ENCODE measurements at regions of chr4 and their contacts with region 1.

Region 1: DNA sequence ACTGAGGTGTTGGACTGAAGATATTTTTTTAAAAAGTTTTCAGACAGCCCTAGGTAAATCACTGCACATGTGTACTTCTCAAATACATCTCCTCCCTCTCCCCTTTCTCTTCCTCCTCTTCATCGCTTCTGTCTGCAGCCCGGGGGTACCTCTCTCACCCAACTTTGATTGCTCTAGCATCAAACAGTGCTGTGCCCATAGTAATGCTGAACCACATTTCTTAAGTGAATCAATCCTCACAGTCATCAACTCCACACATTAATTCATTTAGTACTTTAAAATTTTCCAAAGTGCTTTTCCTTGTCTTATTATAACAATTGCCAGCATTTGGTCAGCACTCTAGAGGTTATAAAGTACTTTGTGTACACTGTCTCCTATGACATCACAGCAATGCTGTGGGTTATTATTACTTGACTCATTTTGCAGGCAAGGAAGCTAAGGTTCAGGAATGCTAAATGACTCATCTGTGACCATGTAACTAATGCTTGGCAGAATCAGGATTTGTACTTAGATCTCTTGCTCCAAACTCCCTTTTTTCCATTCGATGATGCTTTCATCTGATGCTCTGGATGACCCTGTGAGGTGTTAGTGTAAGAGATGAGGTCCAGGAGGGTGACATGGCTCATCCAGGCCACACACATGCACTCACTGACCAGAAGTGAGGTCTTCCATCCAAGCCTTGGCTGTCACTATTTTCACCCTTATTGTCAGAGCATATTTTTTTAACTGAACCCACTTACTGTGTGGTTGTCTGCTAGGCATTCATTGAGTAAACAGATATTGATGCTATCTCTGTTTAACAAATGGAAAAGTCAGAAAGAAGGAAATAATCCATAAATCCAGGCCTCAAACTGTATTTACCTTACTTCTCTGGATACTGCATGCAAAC is 58.8 kb downstream of the RHOH start:
- DNase-seq: peak; percentile 95
- H3K4me3 ChIP-seq: no peak overlapping the region
- H3K27ac ChIP-seq: peak overlapping the region; percentile 95
- H3K4me1 ChIP-seq: peaks cover 53% of the 10 kb centered on the region
- H3K27me3 ChIP-seq: no peaks in the 10 kb centered on the region
- CTCF ChIP-seq: no peak

Region 2: GRCh38 chr4:39994406-39994805 is 261.2 kb before region 1 on chr4:
- CTCF ChIA-PET with region 1: no interaction called
- dilution Hi-C with region 1: no loop called
- in situ Hi-C with region 1: no loop called
- intact Hi-C with region 1: no loop called
- DNase-seq: no peak
- H3K4me3 ChIP-seq: no peak overlapping the region
- H3K27ac ChIP-seq: no peak overlapping the region
- H3K4me1 ChIP-seq: no peaks in the 10 kb centered on the region
- H3K27me3 ChIP-seq: no peaks in the 10 kb centered on the region
- CTCF ChIP-seq: no peak

Region 3: DNA sequence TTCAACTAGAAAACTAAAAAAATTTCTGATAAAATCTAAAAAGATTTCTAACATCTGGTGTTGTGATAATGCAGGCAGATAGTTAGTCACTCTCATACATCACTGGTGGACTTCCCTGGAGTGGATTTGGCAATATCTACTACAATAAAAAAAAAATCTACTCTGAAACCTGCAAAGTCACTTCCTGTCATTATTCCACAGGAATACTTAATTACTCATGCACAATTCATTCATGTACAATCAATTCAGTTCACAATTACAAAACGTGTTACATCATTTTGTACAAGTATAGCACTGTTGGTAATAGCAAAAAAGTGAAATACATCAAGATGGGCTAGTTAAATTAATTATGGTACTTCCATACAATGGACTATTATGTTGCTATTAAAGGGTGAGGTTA is 75.3 kb before region 1 on chr4:
- CTCF ChIA-PET with region 1: no interaction called
- dilution Hi-C with region 1: no loop called
- in situ Hi-C with region 1: no loop called
- intact Hi-C with region 1: loop called (anchors 2 kb)
- DNase-seq: peak; percentile 93
- H3K4me3 ChIP-seq: no peak overlapping the region
- H3K27ac ChIP-seq: peak overlapping the region; percentile 99
- H3K4me1 ChIP-seq: peaks cover 33% of the 10 kb centered on the region
- H3K27me3 ChIP-seq: no peaks in the 10 kb centered on the region
- CTCF ChIP-seq: no peak

Region 4: DNA sequence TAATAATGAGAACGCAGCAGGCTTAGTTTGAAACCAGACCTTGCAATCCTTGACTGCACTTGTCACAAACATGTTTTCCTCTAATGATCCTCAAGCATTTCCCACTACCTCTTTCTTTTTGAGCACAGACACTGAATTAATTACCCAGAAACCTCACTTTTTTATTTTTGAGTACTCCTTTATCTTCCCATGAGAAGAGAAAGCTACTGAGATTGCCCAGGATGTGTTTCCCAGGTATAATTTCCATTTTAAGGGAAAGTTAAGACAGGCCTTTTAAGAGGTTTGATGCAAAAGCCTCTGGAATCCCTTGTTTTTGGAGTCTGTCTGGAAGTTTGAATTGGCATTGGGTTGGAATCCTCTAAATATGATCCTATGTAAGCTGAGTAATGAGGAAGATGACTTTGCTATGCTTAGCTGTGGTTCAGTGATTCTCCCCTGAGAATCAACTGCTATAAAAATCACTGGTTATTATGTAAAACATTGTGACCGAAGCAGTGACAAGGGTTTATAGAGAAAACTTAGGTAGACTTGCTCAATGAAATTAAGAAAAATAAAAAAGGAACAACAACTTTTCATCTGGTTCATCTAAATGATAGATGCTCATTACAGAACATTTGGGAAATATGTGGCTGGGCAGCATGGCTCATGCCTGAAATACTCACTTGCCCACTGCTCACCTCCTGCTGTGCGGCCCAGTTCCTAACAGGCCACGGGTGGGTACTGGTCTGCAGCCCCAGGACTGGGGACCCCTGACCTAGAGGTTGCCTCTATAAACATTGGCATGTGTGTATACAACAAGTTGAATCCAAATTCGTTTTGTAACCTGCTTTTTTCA is 69.6 kb before region 1 on chr4:
- CTCF ChIA-PET with region 1: no interaction called
- dilution Hi-C with region 1: no loop called
- in situ Hi-C with region 1: no loop called
- intact Hi-C with region 1: loop called (anchors 2 kb)
- DNase-seq: no peak
- H3K4me3 ChIP-seq: no peak overlapping the region
- H3K27ac ChIP-seq: peak overlapping the region; percentile 98
- H3K4me1 ChIP-seq: peaks cover 34% of the 10 kb centered on the region
- H3K27me3 ChIP-seq: no peaks in the 10 kb centered on the region
- CTCF ChIP-seq: no peak

Region 5: DNA sequence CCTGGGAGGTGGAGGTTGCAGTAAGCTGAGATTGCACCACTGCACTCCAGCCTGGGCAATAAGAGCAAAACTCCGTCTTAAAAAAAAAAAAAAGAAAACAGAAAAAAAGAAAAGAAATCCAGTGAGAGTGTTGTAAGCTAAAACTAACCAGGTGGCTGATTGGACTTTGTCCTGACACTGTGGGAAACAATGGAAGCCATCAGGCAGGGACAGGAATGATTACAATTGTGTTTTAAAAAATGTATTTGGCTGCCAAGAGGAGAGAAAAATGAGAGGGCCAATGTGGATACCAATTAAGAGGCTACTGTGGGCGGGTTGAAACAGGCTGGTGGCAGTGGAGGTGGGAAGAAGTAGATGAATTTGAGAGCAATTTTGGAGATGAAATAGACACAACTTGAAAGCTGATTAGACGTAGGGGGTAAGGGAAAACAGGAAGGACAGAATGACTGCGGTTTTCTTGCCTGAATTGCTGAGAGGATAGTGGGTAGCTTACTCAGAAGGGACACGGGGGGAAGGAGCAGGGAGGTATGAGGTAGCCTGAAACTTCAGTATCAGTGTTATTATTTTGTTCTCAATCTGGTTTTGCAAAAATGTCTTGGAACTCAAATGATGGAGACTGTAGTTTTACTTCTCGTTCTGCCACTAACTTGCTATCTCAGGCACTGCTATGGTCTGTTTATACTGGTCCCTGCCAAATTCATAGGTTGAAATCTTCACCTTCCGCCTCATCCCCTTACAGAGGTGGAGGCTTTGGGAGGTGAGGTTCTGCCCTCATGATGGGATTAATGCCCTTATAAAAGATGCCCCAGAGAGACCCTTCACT is 33.9 kb after region 1 on chr4:
- CTCF ChIA-PET with region 1: no interaction called
- dilution Hi-C with region 1: no loop called
- in situ Hi-C with region 1: no loop called
- intact Hi-C with region 1: loop called (anchors 2 kb)
- DNase-seq: no peak
- H3K4me3 ChIP-seq: no peak overlapping the region
- H3K27ac ChIP-seq: peak overlapping the region; percentile 62
- H3K4me1 ChIP-seq: peaks cover 32% of the 10 kb centered on the region
- H3K27me3 ChIP-seq: no peaks in the 10 kb centered on the region
- CTCF ChIP-seq: no peak

Region 6: DNA sequence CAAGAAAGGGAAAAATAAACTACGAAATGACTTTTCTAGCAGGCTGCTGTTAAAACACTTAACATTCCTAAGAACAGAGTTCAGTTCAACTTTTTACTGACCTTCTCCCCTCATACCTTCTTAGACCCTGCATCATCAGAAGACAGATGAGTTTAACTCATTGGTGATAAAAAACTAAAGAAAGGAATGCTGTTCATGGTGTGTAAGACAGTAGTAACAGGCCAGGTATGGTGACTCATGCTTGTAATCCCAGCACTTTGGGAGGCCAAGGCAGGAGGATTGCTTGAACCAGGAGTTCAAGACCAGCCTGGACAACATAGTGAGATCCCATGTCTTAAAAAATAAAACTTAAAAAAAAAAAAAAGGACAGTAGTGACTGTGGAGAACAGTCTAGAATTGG is 357.8 kb after region 1 on chr4:
- CTCF ChIA-PET with region 1: no interaction called
- dilution Hi-C with region 1: no loop called
- in situ Hi-C with region 1: no loop called
- intact Hi-C with region 1: no loop called
- DNase-seq: no peak
- H3K4me3 ChIP-seq: no peak overlapping the region
- H3K27ac ChIP-seq: no peak overlapping the region
- H3K4me1 ChIP-seq: no peaks in the 10 kb centered on the region
- H3K27me3 ChIP-seq: no peaks in the 10 kb centered on the region
- CTCF ChIP-seq: no peak